Activated CD8-positive, alpha-beta T cell treated with anti-CD3 and anti-CD28 coated beads, Interleukin-2, amount 10 ng/mL, durations not matched to agents 7 days and 5 days (primary cell): ENCODE measurements at regions of chr2 and their contacts with region 1.

Region 1: GRCh38 chr2:68467077-68467960 is at the starts of genes APLF and FBXO48:
- DNase-seq: peak; percentile 99
- ATAC-seq: peak; percentile 94
- H3K4me3 Mint-ChIP-seq: peak within 1 kb of the TSS; percentile 98
- H3K27ac Mint-ChIP-seq: peak within 1 kb of the TSS; percentile 92
- H3K4me1 Mint-ChIP-seq: peaks cover 34% of the 10 kb centered on the region
- H3K27me3 Mint-ChIP-seq: peaks cover 2% of the 10 kb centered on the region
- total RNA-seq, gene APLF: 2.2 to 2.6 TPM
- total RNA-seq, gene FBXO48: 2.4 to 2.6 TPM

Region 2: GRCh38 chr2:68441179-68441993 is 25.9 kb before region 1 on chr2:
- CTCF ChIA-PET with region 1: interaction called, 40 read pairs
- POLR2A ChIA-PET with region 1: no interaction called
- DNase-seq: peak; percentile 91
- ATAC-seq: peak; percentile 95
- H3K4me3 Mint-ChIP-seq: no peak overlapping the region
- H3K27ac Mint-ChIP-seq: peak overlapping the region; percentile 18
- H3K4me1 Mint-ChIP-seq: peaks cover 10% of the 10 kb centered on the region
- H3K27me3 Mint-ChIP-seq: peaks cover 10% of the 10 kb centered on the region

Region 3: DNA sequence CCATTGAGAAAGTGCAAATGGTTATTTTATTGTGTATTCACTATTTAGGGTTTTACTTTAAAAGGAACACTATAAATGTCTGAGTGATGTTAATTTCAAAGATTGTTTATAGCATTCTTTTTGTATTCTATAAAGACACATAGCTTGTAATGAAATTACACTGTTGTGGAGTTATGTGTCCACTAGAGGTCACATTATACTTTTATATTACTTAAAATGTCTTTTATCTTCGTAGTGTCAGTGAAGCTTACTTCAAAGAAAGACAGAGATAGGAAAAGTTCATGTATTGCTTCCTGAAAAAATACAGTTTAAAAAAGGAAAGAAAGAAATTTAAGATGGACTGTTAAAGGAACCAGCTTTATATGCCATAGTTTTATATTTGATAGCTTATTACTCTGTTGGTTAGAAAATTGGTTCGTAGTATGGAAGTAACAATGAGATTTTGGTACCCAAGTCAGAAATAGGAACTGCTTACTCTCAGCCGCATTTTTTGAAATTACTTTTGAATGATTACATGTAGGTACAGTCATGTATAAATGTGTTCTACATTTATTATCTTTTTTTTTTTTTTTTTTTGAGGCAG is 20.5 kb after region 1 on chr2:
- CTCF ChIA-PET with region 1: interaction called, 26 read pairs
- POLR2A ChIA-PET with region 1: no interaction called
- DNase-seq: no peak
- ATAC-seq: peak; percentile 49
- H3K4me3 Mint-ChIP-seq: no peak overlapping the region
- H3K27ac Mint-ChIP-seq: no peak overlapping the region
- H3K4me1 Mint-ChIP-seq: peaks cover 3% of the 10 kb centered on the region
- H3K27me3 Mint-ChIP-seq: no peaks in the 10 kb centered on the region

Region 4: DNA sequence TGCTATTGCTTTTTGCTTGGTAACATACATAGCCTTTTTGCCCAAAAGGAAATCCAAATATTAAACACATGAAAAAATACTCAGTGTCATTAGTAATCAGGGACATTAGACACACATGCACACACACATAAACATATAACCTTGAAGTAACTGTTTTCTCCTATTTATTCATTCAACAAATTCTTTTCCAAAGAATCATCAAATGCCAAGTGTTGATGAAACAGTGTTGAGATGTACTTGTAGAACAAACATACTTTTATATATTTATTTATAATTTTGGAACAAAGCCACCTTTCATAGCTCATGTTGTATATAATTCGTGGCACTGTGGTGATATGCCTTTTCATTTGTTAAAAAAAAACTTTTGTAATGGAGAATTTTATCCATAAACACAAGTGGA is 81.1 kb after region 1 on chr2:
- CTCF ChIA-PET with region 1: no interaction called
- POLR2A ChIA-PET with region 1: no interaction called
- DNase-seq: no peak
- ATAC-seq: no peak
- H3K4me3 Mint-ChIP-seq: no peak overlapping the region
- H3K27ac Mint-ChIP-seq: no peak overlapping the region
- H3K4me1 Mint-ChIP-seq: no peaks in the 10 kb centered on the region
- H3K27me3 Mint-ChIP-seq: no peaks in the 10 kb centered on the region

Region 5: DNA sequence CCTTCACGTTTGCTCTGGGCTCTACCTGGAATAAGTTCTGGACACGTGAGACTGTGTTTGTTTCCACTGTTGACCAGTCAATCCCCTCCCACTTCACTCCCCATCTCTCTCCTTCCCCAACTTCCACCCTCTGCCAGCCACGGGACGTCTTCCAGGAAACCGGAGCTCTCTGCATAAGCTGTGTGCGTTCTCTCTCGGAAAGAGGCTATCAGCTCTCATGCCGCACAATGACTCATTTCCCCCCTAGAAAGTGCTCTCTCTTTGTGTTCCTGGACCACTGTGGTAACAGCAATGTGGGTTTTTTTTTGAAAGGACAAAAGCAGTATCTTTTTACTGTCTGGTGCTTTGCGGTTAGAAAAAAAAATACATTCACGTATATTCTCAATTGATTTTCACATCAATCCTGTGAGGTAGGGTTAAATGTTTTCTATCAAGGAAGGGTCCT is 186.2 kb after region 1 on chr2:
- CTCF ChIA-PET with region 1: interaction called, 21 read pairs
- POLR2A ChIA-PET with region 1: interaction called, 3 read pairs
- DNase-seq: peak; percentile 77
- ATAC-seq: peak; percentile 92
- H3K4me3 Mint-ChIP-seq: peak overlapping the region; percentile 27
- H3K27ac Mint-ChIP-seq: peak overlapping the region; percentile 67
- H3K4me1 Mint-ChIP-seq: peaks cover 52% of the 10 kb centered on the region
- H3K27me3 Mint-ChIP-seq: peaks cover 35% of the 10 kb centered on the region

Region 6: GRCh38 chr2:68721482-68722101 is 254.3 kb after region 1 on chr2:
- CTCF ChIA-PET with region 1: interaction called, 69 read pairs
- POLR2A ChIA-PET with region 1: interaction called, 3 read pairs
- DNase-seq: peak; percentile 68
- ATAC-seq: peak; percentile 72
- H3K4me3 Mint-ChIP-seq: peak overlapping the region; percentile 46
- H3K27ac Mint-ChIP-seq: peak overlapping the region; percentile 91
- H3K4me1 Mint-ChIP-seq: peaks cover 98% of the 10 kb centered on the region
- H3K27me3 Mint-ChIP-seq: no peaks in the 10 kb centered on the region

Region 7: GRCh38 chr2:68751397-68752339 is 284.3 kb after region 1 on chr2:
- CTCF ChIA-PET with region 1: interaction called, 55 read pairs
- POLR2A ChIA-PET with region 1: interaction called, 3 read pairs
- DNase-seq: peak; percentile 95
- ATAC-seq: peak; percentile 98
- H3K4me3 Mint-ChIP-seq: peak overlapping the region; percentile 35
- H3K27ac Mint-ChIP-seq: peak overlapping the region; percentile 78
- H3K4me1 Mint-ChIP-seq: peaks cover 87% of the 10 kb centered on the region
- H3K27me3 Mint-ChIP-seq: no peaks in the 10 kb centered on the region